CD4-positive, alpha-beta T cell (primary cell): ENCODE measurements at regions of chr6 and their contacts with region 1.

Region 1: GRCh38 chr6:167200806-167201205 is 43.0 kb upstream of the GPR31 start:
- DNase-seq: no peak
- ATAC-seq: no peak
- H3K4me3 ChIP-seq: no peak overlapping the region
- H3K4me3 Mint-ChIP-seq: no peak overlapping the region
- H3K27ac ChIP-seq: no peak overlapping the region
- H3K27ac Mint-ChIP-seq: no peak overlapping the region
- H3K4me1 ChIP-seq: no peaks in the 10 kb centered on the region
- H3K4me1 Mint-ChIP-seq: no peaks in the 10 kb centered on the region
- H3K27me3 ChIP-seq: no peaks in the 10 kb centered on the region
- H3K27me3 Mint-ChIP-seq: peaks cover 45% of the 10 kb centered on the region
- CTCF ChIP-seq: no peak

Region 2: DNA sequence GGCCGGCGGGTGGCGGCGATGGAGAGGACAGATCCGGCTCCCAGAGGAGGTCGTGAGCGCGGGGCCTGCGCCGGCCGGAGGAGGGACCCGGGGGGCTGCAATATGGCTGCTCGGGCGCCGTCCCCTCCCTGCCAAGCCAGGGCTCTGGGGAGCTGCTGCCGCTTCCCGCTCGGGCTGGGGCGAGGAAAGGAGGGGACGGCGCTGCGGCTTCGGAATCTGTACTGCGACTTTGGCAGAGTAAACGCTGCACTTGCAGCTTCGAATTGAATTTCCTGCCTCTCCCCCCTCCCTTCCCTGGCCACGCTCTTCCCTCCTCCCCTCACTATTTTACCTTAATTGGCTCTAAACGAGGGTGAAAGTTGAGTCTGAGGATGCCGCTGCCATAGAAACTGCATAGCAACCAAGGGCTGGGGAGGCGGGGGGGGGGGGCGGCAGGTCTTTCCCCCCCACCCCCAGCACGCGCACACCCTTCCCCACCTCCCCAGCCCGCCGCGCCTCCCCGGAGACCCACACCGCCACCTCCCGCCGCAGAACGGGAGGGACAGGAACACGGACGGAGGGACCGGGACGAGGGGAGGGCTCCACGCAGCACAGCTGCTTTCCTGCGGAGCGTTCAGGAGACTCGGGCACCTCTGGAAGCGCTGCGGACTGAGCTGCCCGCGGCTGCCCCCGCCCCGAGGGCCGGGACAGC is 338.4 kb before region 1 on chr6:
- CTCF ChIA-PET with region 1: no interaction called
- POLR2A ChIA-PET with region 1: no interaction called
- intact Hi-C with region 1: no loop called
- DNase-seq: peak; percentile 13 to 80 (median 34)
- ATAC-seq: peak; percentile 87
- H3K4me3 ChIP-seq: peak overlapping the region; percentile 63
- H3K4me3 Mint-ChIP-seq: peak overlapping the region; percentile 94
- H3K27ac ChIP-seq: no peak overlapping the region
- H3K27ac Mint-ChIP-seq: peak overlapping the region; percentile 58
- H3K4me1 ChIP-seq: peaks cover 17% of the 10 kb centered on the region
- H3K4me1 Mint-ChIP-seq: peaks cover 17% of the 10 kb centered on the region
- H3K27me3 ChIP-seq: peaks cover 0 to 3% of the 10 kb centered on the region in 2 experiments
- H3K27me3 Mint-ChIP-seq: no peaks in the 10 kb centered on the region
- CTCF ChIP-seq: peak; percentile 28

Region 3: GRCh38 chr6:167356874-167357273 is 156.1 kb after region 1 on chr6:
- CTCF ChIA-PET with region 1: no interaction called
- POLR2A ChIA-PET with region 1: no interaction called
- intact Hi-C with region 1: loop called in 1 of 2 experiments (anchors 5 kb)
- DNase-seq: no peak
- ATAC-seq: no peak
- H3K4me3 ChIP-seq: no peak overlapping the region
- H3K4me3 Mint-ChIP-seq: no peak overlapping the region
- H3K27ac ChIP-seq: no peak overlapping the region
- H3K27ac Mint-ChIP-seq: no peak overlapping the region
- H3K4me1 ChIP-seq: peaks cover under 1% of the 10 kb centered on the region
- H3K4me1 Mint-ChIP-seq: peaks cover 2% of the 10 kb centered on the region
- H3K27me3 ChIP-seq: no peaks in the 10 kb centered on the region
- H3K27me3 Mint-ChIP-seq: peaks cover 15% of the 10 kb centered on the region
- CTCF ChIP-seq: no peak